Activated CD4-positive, alpha-beta T cell treated with anti-CD3 and anti-CD28 coated beads for 36 hours (primary cell): ENCODE measurements at regions of chr11 and their contacts with region 1.

Region 1: DNA sequence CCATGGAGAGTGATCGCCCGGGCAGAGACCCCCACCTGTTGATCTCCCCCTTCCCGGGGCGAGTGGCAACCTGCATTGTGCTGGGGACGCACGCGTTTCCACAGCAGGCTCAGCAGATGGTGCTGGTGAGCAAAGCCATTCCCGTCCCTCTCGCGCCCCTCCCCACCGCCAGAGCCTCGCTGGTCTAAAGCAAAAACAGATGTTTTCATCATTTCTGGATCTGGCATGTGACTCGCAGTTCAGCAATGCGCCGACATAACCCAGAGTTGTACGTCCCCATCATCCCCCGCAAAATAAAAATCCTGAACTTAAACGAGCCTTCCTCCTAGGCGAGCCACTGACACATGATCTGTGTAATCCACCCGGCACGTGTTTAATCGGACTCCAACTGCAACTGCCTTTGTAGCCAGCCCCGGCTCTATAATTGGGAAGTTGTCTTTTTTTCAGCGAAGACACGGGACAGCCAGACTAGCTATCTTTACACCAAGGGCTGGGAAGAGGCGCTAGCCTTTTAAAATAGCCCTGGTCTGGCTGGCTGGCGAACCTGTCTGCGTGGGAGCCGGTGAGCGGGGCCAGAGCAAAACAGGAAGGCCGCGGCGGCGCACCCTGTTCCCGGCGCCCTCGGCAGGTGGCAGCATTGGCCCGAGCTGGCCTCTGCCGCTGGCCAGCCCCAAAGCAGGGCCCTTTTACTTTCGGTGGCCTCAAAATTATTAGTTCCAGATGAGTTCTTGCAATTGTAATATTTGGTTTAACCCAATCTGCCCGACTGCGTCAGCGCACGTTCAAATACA is 203.0 kb upstream of the SORL1-AS1 start:
- DNase-seq: peak; percentile 85
- ATAC-seq: peak; percentile 88
- H3K4me3 Mint-ChIP-seq: peak overlapping the region; percentile 70
- H3K27ac Mint-ChIP-seq: peak overlapping the region; percentile 66
- H3K4me1 Mint-ChIP-seq: peaks cover 19% of the 10 kb centered on the region
- H3K27me3 Mint-ChIP-seq: peaks cover 2% of the 10 kb centered on the region

Region 2: GRCh38 chr11:121318848-121319834 is 336.6 kb before region 1 on chr11:
- CTCF ChIA-PET with region 1: interaction called, 4 read pairs
- POLR2A ChIA-PET with region 1: no interaction called
- intact Hi-C with region 1: loop called in 1 of 2 experiments (anchors 2 kb)
- DNase-seq: peak; percentile 27
- ATAC-seq: peak; percentile 63
- H3K4me3 Mint-ChIP-seq: no peak overlapping the region
- H3K27ac Mint-ChIP-seq: no peak overlapping the region
- H3K4me1 Mint-ChIP-seq: peaks cover 18% of the 10 kb centered on the region
- H3K27me3 Mint-ChIP-seq: peaks cover 3% of the 10 kb centered on the region

Region 3: DNA sequence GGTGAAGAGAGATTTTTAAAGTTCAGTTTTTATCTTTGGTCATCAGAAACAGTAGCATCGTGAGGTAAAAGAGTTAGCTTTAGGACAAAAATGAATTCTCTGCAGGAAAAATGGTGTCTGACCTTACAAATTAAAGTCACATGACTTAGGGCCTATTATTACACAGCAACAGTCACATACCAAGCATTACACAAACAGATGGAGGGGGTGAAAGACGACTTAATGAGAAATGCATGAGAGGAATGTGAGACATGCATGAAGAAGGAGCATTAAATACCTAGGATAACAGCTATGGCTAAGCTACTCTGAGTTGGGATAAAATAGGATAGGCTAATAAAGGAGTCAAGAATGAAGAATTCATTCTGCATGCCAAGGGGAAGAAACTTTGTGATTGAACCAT is 382.8 kb after region 1 on chr11:
- CTCF ChIA-PET with region 1: no interaction called
- POLR2A ChIA-PET with region 1: no interaction called
- intact Hi-C with region 1: no loop called
- DNase-seq: no peak
- ATAC-seq: no peak
- H3K4me3 Mint-ChIP-seq: no peak overlapping the region
- H3K27ac Mint-ChIP-seq: no peak overlapping the region
- H3K4me1 Mint-ChIP-seq: no peaks in the 10 kb centered on the region
- H3K27me3 Mint-ChIP-seq: peaks cover 6% of the 10 kb centered on the region

Region 4: GRCh38 chr11:122108192-122108799 is 452.6 kb after region 1 on chr11:
- CTCF ChIA-PET with region 1: no interaction called
- POLR2A ChIA-PET with region 1: no interaction called
- intact Hi-C with region 1: loop called (anchors 10 kb)
- DNase-seq: peak; percentile 38
- ATAC-seq: no peak
- H3K4me3 Mint-ChIP-seq: no peak overlapping the region
- H3K27ac Mint-ChIP-seq: no peak overlapping the region
- H3K4me1 Mint-ChIP-seq: no peaks in the 10 kb centered on the region
- H3K27me3 Mint-ChIP-seq: peaks cover 12% of the 10 kb centered on the region

Region 5: DNA sequence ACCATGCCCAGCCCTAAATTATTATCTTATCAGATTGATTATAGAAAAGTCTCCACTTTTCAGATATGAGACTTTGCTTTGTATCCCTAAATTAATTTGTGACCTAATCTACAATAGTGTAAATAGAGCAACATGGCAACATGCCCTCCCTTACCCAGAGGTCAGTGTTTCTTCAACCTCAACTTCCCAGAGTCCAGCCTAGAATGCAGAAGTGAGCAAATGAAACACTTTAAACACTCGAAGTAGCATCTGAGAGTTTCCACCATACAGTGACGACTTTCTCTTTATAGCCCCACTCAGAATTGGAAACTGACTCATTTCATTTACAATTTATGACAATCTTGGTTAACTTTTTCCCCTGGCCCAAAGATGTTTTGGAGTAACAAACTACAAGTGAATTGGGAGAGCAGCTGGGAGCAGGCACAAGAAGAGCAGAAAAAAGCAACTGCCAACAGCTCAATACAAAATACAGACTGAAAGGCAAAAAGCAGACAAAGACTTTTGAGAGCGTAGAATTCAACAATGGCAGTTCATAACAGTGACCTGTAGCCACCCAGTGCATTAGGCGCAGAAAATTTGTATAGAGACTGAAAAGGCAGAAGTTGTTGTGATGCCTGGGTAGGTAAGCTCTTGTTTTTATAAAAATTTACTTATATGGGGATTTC is 470.4 kb after region 1 on chr11:
- CTCF ChIA-PET with region 1: no interaction called
- POLR2A ChIA-PET with region 1: no interaction called
- intact Hi-C with region 1: no loop called
- DNase-seq: no peak
- ATAC-seq: no peak
- H3K4me3 Mint-ChIP-seq: no peak overlapping the region
- H3K27ac Mint-ChIP-seq: no peak overlapping the region
- H3K4me1 Mint-ChIP-seq: no peaks in the 10 kb centered on the region
- H3K27me3 Mint-ChIP-seq: peaks cover 5% of the 10 kb centered on the region

Region 6: GRCh38 chr11:122360875-122361274 is 705.1 kb after region 1 on chr11:
- CTCF ChIA-PET with region 1: no interaction called
- POLR2A ChIA-PET with region 1: no interaction called
- intact Hi-C with region 1: loop called in 1 of 2 experiments (anchors 5 kb)
- DNase-seq: no peak
- ATAC-seq: no peak
- H3K4me3 Mint-ChIP-seq: no peak overlapping the region
- H3K27ac Mint-ChIP-seq: no peak overlapping the region
- H3K4me1 Mint-ChIP-seq: no peaks in the 10 kb centered on the region
- H3K27me3 Mint-ChIP-seq: peaks cover 11% of the 10 kb centered on the region

Region 7: DNA sequence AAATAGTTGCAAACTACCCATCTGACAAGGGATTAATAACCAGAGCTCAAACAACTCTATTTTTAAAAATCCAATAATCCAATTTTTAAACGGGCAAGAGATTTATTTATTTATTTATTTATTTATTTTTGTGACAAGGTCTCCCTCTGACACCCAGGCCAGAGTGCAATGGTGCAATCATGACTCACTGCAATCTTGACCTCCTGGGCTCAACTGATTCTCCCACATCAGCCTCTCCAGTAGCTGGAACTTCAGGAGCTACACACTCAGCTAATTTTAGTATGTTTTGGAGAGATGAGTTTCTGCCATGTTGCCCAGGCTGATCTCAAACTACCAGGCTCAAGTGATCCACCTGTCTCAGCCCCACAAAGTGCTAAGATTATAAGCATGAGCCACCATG is 727.5 kb after region 1 on chr11:
- CTCF ChIA-PET with region 1: no interaction called
- POLR2A ChIA-PET with region 1: no interaction called
- intact Hi-C with region 1: no loop called
- DNase-seq: no peak
- ATAC-seq: no peak
- H3K4me3 Mint-ChIP-seq: no peak overlapping the region
- H3K27ac Mint-ChIP-seq: no peak overlapping the region
- H3K4me1 Mint-ChIP-seq: no peaks in the 10 kb centered on the region
- H3K27me3 Mint-ChIP-seq: peaks cover 2% of the 10 kb centered on the region

Region 8: DNA sequence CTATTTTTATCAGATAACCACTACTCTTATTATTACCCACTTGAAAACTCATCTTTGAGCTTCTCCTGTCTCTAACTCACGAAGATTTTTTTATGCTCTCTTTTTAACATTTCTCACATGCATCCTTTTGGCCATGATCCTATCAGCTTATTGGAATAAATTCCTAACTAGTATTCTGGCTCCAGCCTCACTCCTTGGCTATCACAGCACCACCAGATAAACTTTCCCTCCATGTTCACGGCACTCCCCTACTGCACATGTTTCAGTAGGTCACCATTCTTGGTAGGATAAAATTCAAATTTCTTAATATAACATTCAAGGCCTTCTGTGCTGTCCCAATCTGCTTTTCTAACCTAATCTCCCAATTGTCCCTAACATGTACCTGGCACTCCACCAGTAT is 813.2 kb after region 1 on chr11:
- CTCF ChIA-PET with region 1: no interaction called
- POLR2A ChIA-PET with region 1: no interaction called
- intact Hi-C with region 1: no loop called
- DNase-seq: no peak
- ATAC-seq: no peak
- H3K4me3 Mint-ChIP-seq: no peak overlapping the region
- H3K27ac Mint-ChIP-seq: no peak overlapping the region
- H3K4me1 Mint-ChIP-seq: no peaks in the 10 kb centered on the region
- H3K27me3 Mint-ChIP-seq: peaks cover 6% of the 10 kb centered on the region

Region 9: DNA sequence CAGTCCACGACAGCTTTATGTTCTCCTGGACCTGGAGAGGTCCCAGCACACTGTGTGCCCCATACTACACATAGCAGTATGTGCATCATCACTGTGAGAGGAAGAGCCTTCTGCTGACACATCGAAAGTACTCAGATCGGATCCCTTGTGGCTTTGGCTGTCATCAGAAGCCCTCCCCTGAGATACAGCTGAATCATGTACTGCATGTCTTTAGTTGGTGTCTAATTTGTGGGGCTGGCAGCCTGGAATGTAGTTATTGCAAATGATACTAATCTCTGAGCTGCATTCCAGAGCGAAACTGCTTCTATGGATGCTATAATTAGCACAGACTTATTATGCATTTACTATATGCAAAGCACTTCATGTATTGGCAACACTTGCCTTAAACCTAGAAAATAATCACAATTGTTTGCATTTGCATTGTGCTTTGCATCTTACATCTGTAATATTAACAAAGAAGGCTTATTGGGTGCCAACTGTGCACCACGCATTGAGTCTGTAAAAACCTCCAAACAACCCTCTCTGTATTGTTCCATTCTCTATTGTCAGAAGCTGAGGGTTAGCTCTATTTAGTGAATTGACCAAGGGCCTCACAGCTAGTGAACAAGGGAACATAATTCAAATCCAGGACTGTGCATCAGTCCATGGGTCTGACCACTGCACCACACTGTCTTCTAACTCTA is 1093.4 kb after region 1 on chr11:
- CTCF ChIA-PET with region 1: no interaction called
- POLR2A ChIA-PET with region 1: no interaction called
- intact Hi-C with region 1: loop called in 1 of 2 experiments (anchors 10 kb)
- DNase-seq: peak; percentile 81
- ATAC-seq: peak; percentile 80
- H3K4me3 Mint-ChIP-seq: no peak overlapping the region
- H3K27ac Mint-ChIP-seq: no peak overlapping the region
- H3K4me1 Mint-ChIP-seq: peaks cover 29% of the 10 kb centered on the region
- H3K27me3 Mint-ChIP-seq: peaks cover 6% of the 10 kb centered on the region